ENCODE measurements at regions of chr11 and their contacts with region 1.

Region 1: DNA sequence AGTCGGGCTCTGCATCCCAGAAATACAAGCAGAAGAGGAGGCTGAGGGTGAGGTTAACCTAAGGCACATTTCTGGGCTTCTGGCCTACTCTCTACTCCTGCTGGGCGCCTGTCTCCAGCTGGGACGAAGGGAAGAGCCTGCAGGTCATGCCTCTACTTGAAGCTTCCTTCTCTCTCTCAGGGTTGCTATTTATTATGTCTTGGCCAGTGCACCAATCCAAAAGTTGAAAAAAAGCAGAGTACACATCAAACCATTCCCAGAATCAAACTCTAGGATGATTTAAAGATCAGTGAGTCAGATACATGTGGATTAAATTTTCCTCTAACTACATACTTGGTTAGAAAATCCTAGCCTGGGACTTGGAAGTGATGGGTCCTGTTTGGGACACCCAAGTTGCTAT is 60.2 kb upstream of the CDON start:
- DNase-seq: no peak
- ATAC-seq: no peak
- H3K4me3 ChIP-seq: no peak overlapping the region
- H3K27ac ChIP-seq: no peak overlapping the region
- H3K4me1 ChIP-seq: no peaks in the 10 kb centered on the region
- H3K27me3 ChIP-seq: no peaks in the 10 kb centered on the region
- CTCF ChIP-seq: no peak
- POLR2A ChIP-seq: no peak
- RAD21 ChIP-seq: no peak

Region 2: DNA sequence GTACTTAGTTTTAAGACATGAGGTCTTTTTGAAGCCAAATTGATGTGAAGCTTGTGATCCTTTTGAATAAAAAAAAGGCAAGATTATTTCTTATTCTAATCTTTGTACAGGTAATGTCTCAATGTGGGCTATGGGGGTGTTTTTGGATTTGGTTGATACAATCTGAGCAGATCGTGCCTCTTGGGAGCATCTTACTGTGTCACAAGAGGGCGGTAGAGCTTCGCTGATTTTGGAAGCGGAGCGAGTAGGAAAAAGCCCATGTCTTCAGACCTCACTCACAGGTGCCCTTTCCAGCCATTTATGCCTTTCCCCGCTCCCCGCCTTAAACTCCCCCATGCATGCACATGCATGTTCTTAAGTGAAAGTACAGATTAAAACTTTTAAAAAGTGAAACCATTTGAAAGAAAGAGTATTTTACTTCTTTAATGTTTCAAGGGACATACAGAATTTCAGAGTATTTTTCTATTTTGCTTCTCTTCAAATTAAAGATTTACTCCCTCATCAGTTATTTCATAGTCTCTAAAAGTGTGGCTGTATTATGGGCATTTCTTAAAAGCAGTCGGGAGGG is 199.8 kb before region 1 on chr11:
- CTCF ChIA-PET with region 1: no interaction called
- POLR2A ChIA-PET with region 1: no interaction called
- RAD21 ChIA-PET with region 1: no interaction called
- intact Hi-C with region 1: loop called (anchors 5 kb)
- DNase-seq: peak; percentile 77
- ATAC-seq: peak; percentile 98
- H3K4me3 ChIP-seq: no peak overlapping the region
- H3K27ac ChIP-seq: no peak overlapping the region
- H3K4me1 ChIP-seq: no peaks in the 10 kb centered on the region
- H3K27me3 ChIP-seq: no peaks in the 10 kb centered on the region
- CTCF ChIP-seq: peak; percentile 75 to 86 (median 86)
- POLR2A ChIP-seq: no peak
- RAD21 ChIP-seq: peak; percentile 95

Region 3: DNA sequence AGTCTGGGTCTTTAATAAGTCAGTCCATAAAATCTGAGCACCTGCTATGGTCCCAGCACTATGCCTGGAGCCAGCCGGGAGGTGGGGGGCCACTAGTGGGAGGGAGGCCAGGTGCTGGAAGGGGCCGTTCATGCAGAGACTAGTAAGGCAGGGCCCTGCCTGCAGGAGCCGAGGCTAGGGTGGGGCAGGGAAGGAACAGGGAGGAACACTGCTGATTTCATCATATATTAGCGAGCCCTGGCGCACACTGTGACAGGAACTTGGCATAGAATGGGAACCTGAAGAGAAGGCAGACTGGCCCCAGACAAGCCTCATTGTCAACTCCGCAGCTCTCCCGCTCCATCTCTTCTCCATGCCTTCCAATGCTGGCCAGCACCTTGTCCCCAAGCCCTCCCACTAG is 169.9 kb before region 1 on chr11:
- CTCF ChIA-PET with region 1: no interaction called
- POLR2A ChIA-PET with region 1: no interaction called
- RAD21 ChIA-PET with region 1: no interaction called
- intact Hi-C with region 1: no loop called
- DNase-seq: no peak
- ATAC-seq: no peak
- H3K4me3 ChIP-seq: no peak overlapping the region
- H3K27ac ChIP-seq: no peak overlapping the region
- H3K4me1 ChIP-seq: no peaks in the 10 kb centered on the region
- H3K27me3 ChIP-seq: no peaks in the 10 kb centered on the region
- CTCF ChIP-seq: no peak
- POLR2A ChIP-seq: no peak
- RAD21 ChIP-seq: no peak

Region 4: GRCh38 chr11:126366065-126366785 is 243.4 kb after region 1 on chr11:
- CTCF ChIA-PET with region 1: no interaction called
- POLR2A ChIA-PET with region 1: no interaction called
- RAD21 ChIA-PET with region 1: no interaction called
- intact Hi-C with region 1: no loop called
- DNase-seq: no peak
- ATAC-seq: no peak
- H3K4me3 ChIP-seq: no peak overlapping the region
- H3K27ac ChIP-seq: no peak overlapping the region
- H3K4me1 ChIP-seq: peaks cover 0 to 4% of the 10 kb centered on the region in 2 experiments; a peak in 1 of 4 replicates
- H3K27me3 ChIP-seq: no peaks in the 10 kb centered on the region
- CTCF ChIP-seq: no peak
- POLR2A ChIP-seq: no peak
- RAD21 ChIP-seq: no peak

Measured in HCT116 (cell line).